ENCODE measurements at regions of chr10 and their contacts with region 1.

Region 1: GRCh38 chr10:72331601-72332422 is 22.9 kb downstream of the DNAJB12 start:
- DNase-seq: peak; percentile 94
- ATAC-seq: peak; percentile 66
- H3K4me3 Mint-ChIP-seq: peak overlapping the region; percentile 64
- H3K27ac Mint-ChIP-seq: peak overlapping the region; percentile 91
- H3K4me1 Mint-ChIP-seq: peaks cover 95% of the 10 kb centered on the region
- H3K27me3 Mint-ChIP-seq: no peaks in the 10 kb centered on the region

Region 2: GRCh38 chr10:72088889-72089575 is 242.8 kb before region 1 on chr10:
- CTCF ChIA-PET with region 1: interaction called, 12 read pairs
- POLR2A ChIA-PET with region 1: interaction called, 14 read pairs
- DNase-seq: peak; percentile 73
- ATAC-seq: peak; percentile 54
- H3K4me3 Mint-ChIP-seq: peak overlapping the region; percentile 97
- H3K27ac Mint-ChIP-seq: peak overlapping the region; percentile 99
- H3K4me1 Mint-ChIP-seq: peaks cover 56% of the 10 kb centered on the region
- H3K27me3 Mint-ChIP-seq: no peaks in the 10 kb centered on the region

Region 3: GRCh38 chr10:72133517-72133916 is 198.3 kb before region 1 on chr10:
- CTCF ChIA-PET with region 1: interaction called, 65 read pairs
- POLR2A ChIA-PET with region 1: no interaction called
- DNase-seq: no peak
- ATAC-seq: no peak
- H3K4me3 Mint-ChIP-seq: no peak overlapping the region
- H3K27ac Mint-ChIP-seq: no peak overlapping the region
- H3K4me1 Mint-ChIP-seq: peaks cover 52% of the 10 kb centered on the region
- H3K27me3 Mint-ChIP-seq: no peaks in the 10 kb centered on the region

Region 4: GRCh38 chr10:72223743-72224101 is 108.1 kb before region 1 on chr10:
- CTCF ChIA-PET with region 1: interaction called, 19 read pairs
- POLR2A ChIA-PET with region 1: interaction called, 5 read pairs
- DNase-seq: no peak
- ATAC-seq: peak; percentile 22
- H3K4me3 Mint-ChIP-seq: peak overlapping the region; percentile 24
- H3K27ac Mint-ChIP-seq: peak overlapping the region; percentile 65
- H3K4me1 Mint-ChIP-seq: peaks cover 51% of the 10 kb centered on the region
- H3K27me3 Mint-ChIP-seq: no peaks in the 10 kb centered on the region

Region 5: DNA sequence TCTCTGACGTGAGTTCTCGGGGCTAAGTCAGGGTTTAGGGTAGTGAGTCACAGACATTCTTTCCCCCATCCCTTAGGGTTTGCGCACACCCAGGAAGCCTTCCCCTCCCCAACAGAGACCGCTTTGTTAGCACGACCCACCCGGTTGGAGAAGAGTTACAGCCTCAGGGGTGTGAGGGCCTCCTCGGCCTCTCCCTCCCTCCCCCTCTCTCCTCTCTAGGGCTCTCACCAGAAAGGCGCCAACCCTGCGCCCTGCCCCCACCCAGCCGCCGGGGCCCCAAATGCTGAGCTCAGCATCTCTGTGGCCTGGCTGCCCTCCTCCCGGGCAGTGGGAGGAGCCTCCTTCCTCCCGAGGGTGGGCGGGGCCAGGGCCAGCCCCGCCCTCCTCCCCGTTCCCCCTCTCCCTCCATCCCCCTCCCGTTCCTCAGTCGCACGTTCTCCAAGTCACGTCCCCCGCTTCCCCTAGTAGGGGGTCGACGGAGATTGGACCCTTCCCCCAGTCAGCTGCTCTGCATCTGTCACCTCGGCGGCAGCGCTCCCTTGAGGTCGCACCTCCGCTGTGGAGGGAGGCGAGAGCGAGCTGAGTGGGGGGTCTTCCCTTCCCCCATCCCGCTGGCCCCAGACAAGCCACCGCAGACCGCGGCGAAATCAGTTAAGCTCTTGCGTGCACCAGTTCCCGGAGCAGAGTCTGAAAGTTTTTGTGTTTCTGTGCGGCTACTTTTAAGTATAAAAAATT is 71.1 kb before region 1 on chr10:
- CTCF ChIA-PET with region 1: interaction called, 53 read pairs
- POLR2A ChIA-PET with region 1: interaction called, 15 read pairs
- DNase-seq: peak; percentile 97
- ATAC-seq: peak; percentile 74
- H3K4me3 Mint-ChIP-seq: peak overlapping the region; percentile 82
- H3K27ac Mint-ChIP-seq: peak overlapping the region; percentile 98
- H3K4me1 Mint-ChIP-seq: peaks cover 65% of the 10 kb centered on the region
- H3K27me3 Mint-ChIP-seq: no peaks in the 10 kb centered on the region

Region 6: GRCh38 chr10:72297968-72298773 is 33.6 kb before region 1 on chr10:
- CTCF ChIA-PET with region 1: interaction called, 23 read pairs
- POLR2A ChIA-PET with region 1: interaction called, 119 read pairs
- DNase-seq: peak; percentile 96
- ATAC-seq: peak; percentile 82
- H3K4me3 Mint-ChIP-seq: peak overlapping the region; percentile 72
- H3K27ac Mint-ChIP-seq: peak overlapping the region; percentile 98
- H3K4me1 Mint-ChIP-seq: peaks cover 65% of the 10 kb centered on the region
- H3K27me3 Mint-ChIP-seq: no peaks in the 10 kb centered on the region

Region 7: GRCh38 chr10:72319416-72320254 is 12.2 kb before region 1 on chr10:
- CTCF ChIA-PET with region 1: interaction called, 45 read pairs
- POLR2A ChIA-PET with region 1: interaction called, 27 read pairs
- DNase-seq: peak; percentile 92
- ATAC-seq: peak; percentile 78
- H3K4me3 Mint-ChIP-seq: peak overlapping the region; percentile 81
- H3K27ac Mint-ChIP-seq: peak overlapping the region; percentile 99
- H3K4me1 Mint-ChIP-seq: peaks cover 88% of the 10 kb centered on the region
- H3K27me3 Mint-ChIP-seq: no peaks in the 10 kb centered on the region

Region 8: DNA sequence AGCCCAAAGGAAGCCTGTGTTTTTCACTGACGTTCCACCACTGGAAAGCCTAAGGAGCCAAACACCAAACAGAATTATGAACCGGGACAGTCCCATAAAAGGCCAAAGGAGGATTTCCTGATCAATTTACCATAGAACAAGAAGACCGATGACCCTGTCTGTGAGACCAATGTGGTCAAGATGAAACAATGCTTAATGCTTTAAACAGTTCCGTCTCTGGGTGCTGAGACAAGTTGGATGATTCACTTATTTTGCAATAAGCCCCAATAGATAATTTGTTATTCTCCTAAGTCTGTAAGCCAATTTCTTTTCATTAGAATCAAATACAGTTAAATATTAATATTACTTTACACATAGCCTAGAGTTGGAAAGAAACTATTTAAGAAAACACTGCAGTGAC is 159.1 kb after region 1 on chr10:
- CTCF ChIA-PET with region 1: no interaction called
- POLR2A ChIA-PET with region 1: no interaction called
- DNase-seq: no peak
- ATAC-seq: no peak
- H3K4me3 Mint-ChIP-seq: no peak overlapping the region
- H3K27ac Mint-ChIP-seq: no peak overlapping the region
- H3K4me1 Mint-ChIP-seq: no peaks in the 10 kb centered on the region
- H3K27me3 Mint-ChIP-seq: no peaks in the 10 kb centered on the region

Region 9: GRCh38 chr10:72567884-72568640 is 236.2 kb after region 1 on chr10:
- CTCF ChIA-PET with region 1: no interaction called
- POLR2A ChIA-PET with region 1: no interaction called
- DNase-seq: no peak
- ATAC-seq: no peak
- H3K4me3 Mint-ChIP-seq: no peak overlapping the region
- H3K27ac Mint-ChIP-seq: no peak overlapping the region
- H3K4me1 Mint-ChIP-seq: peaks cover 7% of the 10 kb centered on the region
- H3K27me3 Mint-ChIP-seq: no peaks in the 10 kb centered on the region